ENCODE measurements at regions of chr6 and their contacts with region 1.

Region 1: GRCh38 chr6:90458353-90459224 is 128.3 kb downstream of the MAP3K7 start:
- DNase-seq: peak; percentile 36 to 91 (median 49)
- H3K4me3 ChIP-seq: peak overlapping the region; percentile 13 to 17
- H3K4me3 Mint-ChIP-seq: peak overlapping the region; percentile 25 to 86 (median 80)
- H3K27ac ChIP-seq: peak overlapping the region; percentile 19
- H3K27ac Mint-ChIP-seq: peak overlapping the region; percentile 76 to 92 (median 90)
- H3K4me1 ChIP-seq: peaks cover 59% of the 10 kb centered on the region
- H3K4me1 Mint-ChIP-seq: peaks cover 29 to 74% (median 51%) of the 10 kb centered on the region in 4 donors
- H3K27me3 ChIP-seq: no peaks in the 10 kb centered on the region
- H3K27me3 Mint-ChIP-seq: no peaks in the 10 kb centered on the region

Region 2: DNA sequence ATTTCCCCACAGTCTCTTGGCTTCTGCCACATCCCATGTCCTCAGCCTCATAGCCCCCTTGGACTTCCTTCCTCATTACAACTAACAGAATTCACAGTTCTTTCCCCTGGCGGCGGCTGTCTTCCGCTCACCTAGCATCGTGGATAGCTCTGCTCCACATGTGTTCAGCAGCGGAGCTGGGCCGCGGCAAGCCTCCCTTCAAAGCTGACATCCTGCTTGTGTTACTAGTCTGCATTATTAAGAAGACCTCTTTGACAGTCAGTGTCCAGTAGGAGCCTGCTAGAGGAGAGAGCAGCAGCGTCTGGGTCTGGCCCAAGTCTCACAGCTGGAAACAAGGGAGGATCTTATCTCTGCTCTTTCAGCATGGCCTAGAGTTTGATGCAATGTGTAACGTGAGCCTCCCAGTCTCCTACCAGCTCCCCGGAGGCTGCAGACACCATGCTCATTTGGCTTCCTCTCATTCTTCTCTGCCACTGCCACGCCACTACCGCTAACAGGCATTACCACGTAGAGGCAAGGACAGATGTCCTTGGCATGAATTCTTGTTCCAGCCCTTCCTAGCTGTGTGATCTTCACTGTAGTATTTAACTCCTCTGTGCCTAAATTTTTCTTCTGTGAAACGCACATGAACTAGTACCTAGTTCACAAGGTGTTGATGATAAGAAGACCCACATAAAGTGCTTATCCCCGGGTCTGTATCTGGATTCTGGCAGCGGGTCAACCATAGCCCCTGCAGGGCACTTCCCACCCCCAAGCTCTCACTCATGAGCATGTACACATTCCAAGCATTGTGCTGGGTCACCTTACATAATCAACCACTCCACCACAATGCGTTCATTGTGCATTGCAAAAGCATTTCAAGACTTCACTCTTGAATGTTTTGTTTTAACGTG is 54.9 kb before region 1 on chr6:
- CTCF ChIA-PET with region 1: interaction called, 4 read pairs
- POLR2A ChIA-PET with region 1: interaction called, 16 read pairs
- intact Hi-C with region 1: no loop called
- DNase-seq: peak in 1 of 5 donors; percentile 9
- H3K4me3 ChIP-seq: no peak overlapping the region
- H3K4me3 Mint-ChIP-seq: peak overlapping the region in 6 of 8 donors; percentile 21 to 76 (median 60)
- H3K27ac ChIP-seq: no peak overlapping the region
- H3K27ac Mint-ChIP-seq: peak overlapping the region; percentile 80 to 94 (median 90)
- H3K4me1 ChIP-seq: peaks cover 63% of the 10 kb centered on the region
- H3K4me1 Mint-ChIP-seq: peaks cover 38 to 66% (median 50%) of the 10 kb centered on the region in 4 donors
- H3K27me3 ChIP-seq: no peaks in the 10 kb centered on the region
- H3K27me3 Mint-ChIP-seq: no peaks in the 10 kb centered on the region

Region 3: DNA sequence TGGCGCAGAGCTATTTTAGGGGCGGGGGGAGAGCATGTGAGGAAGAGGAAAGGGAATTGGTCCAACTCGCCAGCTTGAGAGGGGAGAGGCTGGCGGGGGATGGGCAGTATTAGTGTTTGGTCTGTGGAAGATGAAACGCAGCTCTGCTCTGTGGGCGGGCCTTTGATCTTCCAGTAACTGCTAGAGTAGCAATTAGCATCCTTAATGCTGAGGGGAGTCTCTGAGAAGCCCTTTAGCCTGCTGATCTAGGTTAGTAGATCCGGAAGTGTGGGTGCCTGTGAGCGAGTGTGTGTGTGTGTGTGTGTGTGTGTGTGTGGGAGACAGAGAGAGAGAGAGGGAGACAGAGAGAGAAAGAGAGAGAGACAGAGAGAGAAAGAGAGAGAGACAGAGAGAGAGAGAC is 44.7 kb before region 1 on chr6:
- CTCF ChIA-PET with region 1: no interaction called
- POLR2A ChIA-PET with region 1: interaction called, 7 read pairs
- intact Hi-C with region 1: loop called (anchors 5 kb)
- DNase-seq: peak; percentile 80 to 91 (median 86)
- H3K4me3 ChIP-seq: peak overlapping the region; percentile 25 to 30
- H3K4me3 Mint-ChIP-seq: peak overlapping the region; percentile 79 to 93 (median 84)
- H3K27ac ChIP-seq: peak overlapping the region; percentile 34
- H3K27ac Mint-ChIP-seq: peak overlapping the region; percentile 88 to 100 (median 96)
- H3K4me1 ChIP-seq: peaks cover 38% of the 10 kb centered on the region
- H3K4me1 Mint-ChIP-seq: peaks cover 31 to 62% (median 44%) of the 10 kb centered on the region in 4 donors
- H3K27me3 ChIP-seq: no peaks in the 10 kb centered on the region
- H3K27me3 Mint-ChIP-seq: peaks cover 2% of the 10 kb centered on the region in 2 donors

Region 4: GRCh38 chr6:90425161-90425641 is 33.4 kb before region 1 on chr6:
- CTCF ChIA-PET with region 1: interaction called, 3 read pairs
- POLR2A ChIA-PET with region 1: interaction called, 13 read pairs
- intact Hi-C with region 1: loop called (anchors 2 kb)
- DNase-seq: peak; percentile 29 to 58 (median 49)
- H3K4me3 ChIP-seq: peak overlapping the region in 1 of 2 donors; percentile 36
- H3K4me3 Mint-ChIP-seq: peak overlapping the region; percentile 63 to 88 (median 82)
- H3K27ac ChIP-seq: peak overlapping the region; percentile 50
- H3K27ac Mint-ChIP-seq: peak overlapping the region; percentile 58 to 95 (median 91)
- H3K4me1 ChIP-seq: peaks cover 20% of the 10 kb centered on the region
- H3K4me1 Mint-ChIP-seq: peaks cover 13 to 19% (median 16%) of the 10 kb centered on the region in 4 donors
- H3K27me3 ChIP-seq: no peaks in the 10 kb centered on the region
- H3K27me3 Mint-ChIP-seq: no peaks in the 10 kb centered on the region

Region 5: DNA sequence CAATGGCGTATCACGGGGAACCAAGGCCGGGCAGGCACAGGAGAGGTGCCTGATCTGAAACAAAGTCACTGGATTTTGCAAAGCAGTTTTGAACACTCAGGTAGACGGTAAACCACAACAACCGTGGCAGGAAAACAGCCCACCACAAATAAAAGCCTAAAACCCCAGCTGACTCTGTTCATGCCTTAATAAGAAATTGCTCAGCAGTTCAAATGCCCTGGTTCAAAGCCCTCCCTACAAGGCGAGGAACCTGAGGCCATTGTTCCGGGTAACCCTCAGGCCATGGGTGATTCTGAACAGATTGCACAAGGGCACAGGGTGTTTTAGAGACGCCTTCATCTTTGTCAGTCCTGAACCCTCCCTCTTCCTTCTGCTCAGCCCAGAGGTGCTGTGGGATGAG is 14.2 kb after region 1 on chr6:
- CTCF ChIA-PET with region 1: interaction called, 37 read pairs
- POLR2A ChIA-PET with region 1: interaction called, 17 read pairs
- intact Hi-C with region 1: no loop called
- DNase-seq: peak in 4 of 5 donors; percentile 25 to 44 (median 36)
- H3K4me3 ChIP-seq: no peak overlapping the region
- H3K4me3 Mint-ChIP-seq: peak overlapping the region; percentile 63 to 87 (median 78)
- H3K27ac ChIP-seq: no peak overlapping the region
- H3K27ac Mint-ChIP-seq: peak overlapping the region in 6 of 7 donors; percentile 11 to 79 (median 76)
- H3K4me1 ChIP-seq: peaks cover 43% of the 10 kb centered on the region
- H3K4me1 Mint-ChIP-seq: peaks cover 28 to 66% (median 36%) of the 10 kb centered on the region in 4 donors
- H3K27me3 ChIP-seq: no peaks in the 10 kb centered on the region
- H3K27me3 Mint-ChIP-seq: no peaks in the 10 kb centered on the region

Region 6: GRCh38 chr6:90516074-90516660 is 57.6 kb after region 1 on chr6:
- CTCF ChIA-PET with region 1: no interaction called
- POLR2A ChIA-PET with region 1: no interaction called
- intact Hi-C with region 1: no loop called
- DNase-seq: no peak
- H3K4me3 ChIP-seq: no peak overlapping the region
- H3K4me3 Mint-ChIP-seq: no peak overlapping the region
- H3K27ac ChIP-seq: no peak overlapping the region
- H3K27ac Mint-ChIP-seq: no peak overlapping the region
- H3K4me1 ChIP-seq: no peaks in the 10 kb centered on the region
- H3K4me1 Mint-ChIP-seq: no peaks in the 10 kb centered on the region
- H3K27me3 ChIP-seq: no peaks in the 10 kb centered on the region
- H3K27me3 Mint-ChIP-seq: no peaks in the 10 kb centered on the region

Region 7: DNA sequence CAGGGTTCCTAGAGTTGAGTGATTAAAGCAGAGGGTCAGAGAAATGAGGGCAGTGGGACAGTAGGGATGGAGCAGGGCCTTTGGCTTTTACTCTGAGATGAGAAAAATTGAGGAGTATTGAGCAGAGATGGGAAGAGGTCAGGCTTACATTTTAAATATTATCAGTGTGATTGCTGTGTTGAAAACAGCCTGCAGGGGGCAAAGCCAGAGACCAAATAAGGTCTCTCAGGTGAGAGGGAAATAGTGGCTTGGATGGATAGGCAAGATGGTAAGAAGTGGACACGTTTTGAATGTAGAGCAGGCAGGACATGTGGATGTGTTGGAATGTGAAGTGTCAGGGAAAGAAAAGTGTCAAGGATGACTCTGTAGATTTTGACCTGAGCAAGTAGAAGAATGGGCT is 233.2 kb after region 1 on chr6:
- CTCF ChIA-PET with region 1: no interaction called
- POLR2A ChIA-PET with region 1: no interaction called
- intact Hi-C with region 1: no loop called
- DNase-seq: no peak
- H3K4me3 ChIP-seq: no peak overlapping the region
- H3K4me3 Mint-ChIP-seq: no peak overlapping the region
- H3K27ac ChIP-seq: no peak overlapping the region
- H3K27ac Mint-ChIP-seq: no peak overlapping the region
- H3K4me1 ChIP-seq: no peaks in the 10 kb centered on the region
- H3K4me1 Mint-ChIP-seq: no peaks in the 10 kb centered on the region
- H3K27me3 ChIP-seq: no peaks in the 10 kb centered on the region
- H3K27me3 Mint-ChIP-seq: peaks cover 15 to 17% of the 10 kb centered on the region in 2 donors